PC-9 (cell line): ENCODE measurements at regions of chr2 and their contacts with region 1.

Region 1: GRCh38 chr2:47686018-47686417 is 96.9 kb upstream of the MSH6 start:
- DNase-seq: no peak
- H3K4me3 ChIP-seq: no peak overlapping the region
- H3K27ac ChIP-seq: no peak overlapping the region
- H3K4me1 ChIP-seq: no peaks in the 10 kb centered on the region
- H3K27me3 ChIP-seq: no peaks in the 10 kb centered on the region
- CTCF ChIP-seq: no peak

Region 2: DNA sequence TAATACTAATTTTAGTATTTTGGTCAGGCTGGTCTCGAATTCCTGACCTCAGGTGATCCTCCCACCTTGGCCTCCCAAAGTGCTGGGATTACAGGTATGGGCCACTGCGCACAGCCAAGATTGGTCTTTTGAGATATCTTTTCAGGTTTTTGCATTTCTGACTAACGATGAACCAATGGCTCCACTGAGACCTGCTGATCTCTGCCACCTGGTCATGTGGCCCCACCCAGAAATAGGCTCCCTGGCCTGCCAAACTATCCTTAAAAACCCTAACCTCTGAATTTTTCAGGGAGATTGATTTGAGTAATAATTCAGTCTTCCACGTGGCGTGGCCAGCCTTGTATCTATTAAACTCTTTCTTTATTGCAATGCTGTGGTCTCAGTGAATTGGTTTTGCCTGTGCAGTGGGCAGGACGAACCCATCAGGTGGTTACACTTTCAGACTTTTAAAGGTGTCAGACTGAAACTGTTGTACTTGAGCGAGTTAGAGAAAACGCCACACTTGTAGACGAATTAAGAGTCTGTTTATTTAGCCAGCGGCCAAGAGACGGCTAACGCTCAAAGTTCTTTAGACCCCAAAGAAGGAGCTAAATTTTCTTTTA is 11.1 kb after region 1 on chr2:
- CTCF ChIA-PET with region 1: interaction called, 10 read pairs
- POLR2A ChIA-PET with region 1: no interaction called
- intact Hi-C with region 1: no loop called
- DNase-seq: no peak
- H3K4me3 ChIP-seq: no peak overlapping the region
- H3K27ac ChIP-seq: no peak overlapping the region
- H3K4me1 ChIP-seq: peaks cover 9% of the 10 kb centered on the region
- H3K27me3 ChIP-seq: no peaks in the 10 kb centered on the region
- CTCF ChIP-seq: no peak

Region 3: GRCh38 chr2:47906157-47907038 is 220.4 kb after region 1 on chr2 and contains the start of gene FBXO11:
- CTCF ChIA-PET with region 1: no interaction called
- POLR2A ChIA-PET with region 1: no interaction called
- intact Hi-C with region 1: no loop called
- DNase-seq: peak; percentile 99
- H3K4me3 ChIP-seq: peak within 1 kb of the TSS; percentile 77
- H3K27ac ChIP-seq: peak within 1 kb of the TSS; percentile 86
- H3K4me1 ChIP-seq: peaks cover 33% of the 10 kb centered on the region
- H3K27me3 ChIP-seq: no peaks in the 10 kb centered on the region
- CTCF ChIP-seq: 0 out of 2 replicates have a peak, but pooled peaks have one; percentile 78
- total RNA-seq, gene FBXO11: 49.3 and 49.4 TPM in 2 replicates